ENCODE measurements at regions of chr3 and their contacts with region 1.

Region 1: GRCh38 chr3:24237971-24238767 is 256.5 kb downstream of the THRB start:
- DNase-seq: peak in 4 of 5 donors; percentile 26 to 50 (median 35)
- H3K4me3 ChIP-seq: no peak overlapping the region
- H3K27ac ChIP-seq: no peak overlapping the region
- H3K4me1 ChIP-seq: peaks cover 6% of the 10 kb centered on the region
- H3K27me3 ChIP-seq: no peaks in the 10 kb centered on the region
- CTCF ChIP-seq: peak; percentile 17 to 62 (median 60)
- EP300 ChIP-seq: no peak
- POLR2A ChIP-seq: no peak

Region 2: DNA sequence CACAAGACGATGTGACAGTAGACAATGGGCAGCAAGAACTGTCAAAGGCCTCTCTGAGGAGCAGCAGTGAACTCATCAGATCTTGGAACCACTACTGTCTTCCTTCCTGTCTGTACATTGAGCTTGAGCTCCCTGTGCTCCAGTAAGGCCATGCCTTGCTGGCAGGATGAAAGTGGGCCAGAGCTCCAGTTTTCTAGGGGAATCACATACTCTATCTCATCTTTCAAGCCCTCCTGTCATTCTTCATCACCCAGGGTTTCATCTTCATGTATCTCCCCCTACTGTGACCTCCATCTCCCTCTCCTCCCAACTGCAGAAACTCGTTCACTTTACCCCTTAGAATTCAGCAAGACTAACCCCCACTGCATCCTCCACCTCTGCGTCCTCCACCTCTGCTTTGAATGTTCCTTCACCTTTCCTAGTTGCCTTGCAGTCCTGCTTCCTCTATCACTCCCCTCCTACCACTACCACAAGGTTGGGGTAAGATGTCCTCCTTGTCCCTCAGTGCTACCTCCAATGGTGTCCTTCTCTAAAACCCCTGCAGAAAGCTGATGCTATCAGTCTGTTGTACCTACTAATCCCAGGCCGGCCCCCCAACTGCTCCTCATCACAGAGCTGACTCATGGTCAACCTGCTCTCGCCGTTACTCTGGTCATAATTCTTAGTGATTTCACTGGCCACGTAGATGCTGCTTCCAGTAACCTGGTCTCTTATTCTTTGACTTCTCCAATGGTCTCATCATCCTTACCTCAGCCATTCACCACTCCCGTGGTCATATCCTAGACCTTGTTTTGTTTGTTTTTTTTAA is 343.7 kb before region 1 on chr3:
- intact Hi-C with region 1: loop called in 1 of 4 experiments (anchors 10 kb)
- DNase-seq: no peak
- H3K4me3 ChIP-seq: no peak overlapping the region
- H3K27ac ChIP-seq: no peak overlapping the region
- H3K4me1 ChIP-seq: no peaks in the 10 kb centered on the region
- H3K27me3 ChIP-seq: no peaks in the 10 kb centered on the region
- CTCF ChIP-seq: no peak
- EP300 ChIP-seq: no peak
- POLR2A ChIP-seq: no peak

Region 3: GRCh38 chr3:23900744-23901143 is 337.4 kb before region 1 on chr3:
- intact Hi-C with region 1: loop called in 2 of 4 experiments (anchors 10 kb)
- DNase-seq: no peak
- H3K4me3 ChIP-seq: no peak overlapping the region
- H3K27ac ChIP-seq: no peak overlapping the region
- H3K4me1 ChIP-seq: no peaks in the 10 kb centered on the region
- H3K27me3 ChIP-seq: no peaks in the 10 kb centered on the region
- CTCF ChIP-seq: no peak
- EP300 ChIP-seq: no peak
- POLR2A ChIP-seq: no peak

Region 4: GRCh38 chr3:23999012-23999641 is 239.0 kb before region 1 on chr3:
- intact Hi-C with region 1: loop called (anchors 5 to 10 kb)
- DNase-seq: peak; percentile 58 to 85 (median 82)
- H3K4me3 ChIP-seq: no peak overlapping the region
- H3K27ac ChIP-seq: no peak overlapping the region
- H3K4me1 ChIP-seq: peaks cover 1% of the 10 kb centered on the region
- H3K27me3 ChIP-seq: no peaks in the 10 kb centered on the region
- CTCF ChIP-seq: peak; percentile 59 to 96 (median 96)
- EP300 ChIP-seq: no peak
- POLR2A ChIP-seq: no peak

Region 5: DNA sequence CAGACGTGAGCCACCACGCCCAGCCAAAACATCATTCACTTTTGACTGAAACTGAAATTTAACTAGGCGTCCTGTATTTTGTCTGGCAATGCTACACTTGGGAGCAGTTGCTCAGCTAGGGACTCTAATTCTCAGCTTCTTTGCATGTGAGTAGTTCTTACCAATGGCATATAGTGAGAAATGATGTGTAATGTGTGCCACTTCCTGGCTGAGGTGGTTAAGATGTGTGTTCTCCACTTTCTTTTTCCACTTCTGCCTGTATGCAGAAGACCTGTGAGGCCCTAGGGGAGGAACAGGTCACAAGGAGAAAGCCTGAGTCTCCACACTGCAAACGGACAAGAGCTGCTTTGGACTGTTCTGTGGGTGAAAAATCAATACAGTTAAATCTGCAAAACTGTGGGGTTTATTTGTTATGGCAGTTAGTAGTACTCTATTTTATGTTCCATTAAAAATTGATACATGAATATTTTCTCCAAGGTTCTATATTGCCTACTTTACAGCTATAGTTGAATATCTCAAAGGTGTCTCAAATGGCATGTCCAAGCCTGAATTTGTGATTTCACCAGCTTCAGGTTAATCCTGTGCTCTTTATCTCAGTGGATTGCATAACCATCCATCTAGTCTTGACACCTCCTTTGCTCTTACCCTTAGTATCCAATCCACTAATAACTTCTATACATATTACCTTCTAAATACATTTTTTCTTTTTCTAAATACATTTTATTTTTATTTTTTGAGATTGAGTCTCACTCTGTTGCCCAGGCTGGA is 233.8 kb before region 1 on chr3:
- intact Hi-C with region 1: loop called (anchors 5 to 10 kb)
- DNase-seq: no peak
- H3K4me3 ChIP-seq: no peak overlapping the region
- H3K27ac ChIP-seq: no peak overlapping the region
- H3K4me1 ChIP-seq: no peaks in the 10 kb centered on the region
- H3K27me3 ChIP-seq: no peaks in the 10 kb centered on the region
- CTCF ChIP-seq: no peak
- EP300 ChIP-seq: no peak
- POLR2A ChIP-seq: no peak